Naive thymus-derived CD4-positive, alpha-beta T cell (primary cell): ENCODE measurements at regions of chr22 and their contacts with region 1.

Region 1: GRCh38 chr22:21952586-21953571 is at the start of gene PPM1F:
- DNase-seq: peak; percentile 79 to 100 (median 92)
- ATAC-seq: peak; percentile 98
- H3K4me3 ChIP-seq: peak within 1 kb of the TSS; percentile 79
- H3K4me3 Mint-ChIP-seq: peak within 1 kb of the TSS; percentile 80 to 90 (median 88)
- H3K27ac ChIP-seq: peak within 1 kb of the TSS; percentile 78
- H3K27ac Mint-ChIP-seq: peak within 1 kb of the TSS in 8 of 9 donors; percentile 43 to 80 (median 72)
- H3K4me1 ChIP-seq: peaks cover 7% of the 10 kb centered on the region in 2 donors
- H3K4me1 Mint-ChIP-seq: peaks cover 16 to 25% (median 19%) of the 10 kb centered on the region in 7 donors
- H3K27me3 ChIP-seq: no peaks in the 10 kb centered on the region
- H3K27me3 Mint-ChIP-seq: no peaks in the 10 kb centered on the region
- total RNA-seq, gene PPM1F: 21.3 to 58.0 (median 27.8) TPM

Region 2: DNA sequence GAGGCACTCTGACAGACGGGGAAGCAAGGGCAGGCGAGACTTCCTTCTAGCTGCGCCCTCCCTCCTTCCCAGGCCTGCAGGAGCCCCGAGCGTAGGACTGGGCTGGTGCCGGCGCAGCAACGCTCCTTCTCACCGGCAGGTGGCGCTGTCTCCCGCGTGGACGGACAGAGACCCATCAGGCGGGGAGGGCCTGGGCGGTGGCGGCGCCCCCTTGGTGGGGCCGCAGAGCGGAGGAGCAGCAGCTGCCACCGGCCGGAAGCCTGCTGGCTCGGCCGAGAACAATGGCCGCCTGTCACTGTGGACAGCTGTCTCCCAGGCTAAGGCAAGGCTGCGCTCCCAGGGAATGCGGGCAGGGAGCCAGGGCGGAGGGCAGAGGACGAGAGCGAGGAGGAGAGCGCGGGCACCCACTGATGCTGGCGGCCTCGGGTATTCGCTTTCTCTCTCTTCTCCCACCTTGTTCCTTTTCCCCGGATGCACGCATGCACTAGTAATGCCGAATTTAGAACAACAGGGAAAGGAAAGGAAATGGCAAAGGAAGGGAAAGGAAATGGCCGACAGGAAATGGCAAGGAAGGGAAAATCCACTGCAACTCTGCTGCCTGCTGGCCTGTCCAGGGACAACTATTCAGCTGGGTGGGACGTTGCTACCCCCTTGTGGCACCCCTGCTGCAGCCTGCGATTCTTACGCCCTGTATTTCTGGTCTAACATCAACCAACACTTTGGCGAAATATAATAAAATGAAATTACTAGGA is 14.6 kb before region 1 on chr22:
- CTCF ChIA-PET with region 1: interaction called, 63 read pairs
- POLR2A ChIA-PET with region 1: interaction called, 4 read pairs
- intact Hi-C with region 1: loop called (anchors 2 kb)
- DNase-seq: peak; percentile 76 to 95 (median 87)
- ATAC-seq: peak; percentile 94
- H3K4me3 ChIP-seq: peak overlapping the region; percentile 69
- H3K4me3 Mint-ChIP-seq: peak overlapping the region; percentile 72 to 84 (median 80)
- H3K27ac ChIP-seq: peak overlapping the region; percentile 60
- H3K27ac Mint-ChIP-seq: peak overlapping the region; percentile 33 to 90 (median 81)
- H3K4me1 ChIP-seq: peaks cover 12 to 13% of the 10 kb centered on the region in 2 donors
- H3K4me1 Mint-ChIP-seq: peaks cover 20 to 55% (median 48%) of the 10 kb centered on the region in 7 donors
- H3K27me3 ChIP-seq: no peaks in the 10 kb centered on the region
- H3K27me3 Mint-ChIP-seq: no peaks in the 10 kb centered on the region